CD4-positive, alpha-beta T cell (primary cell): ENCODE measurements at regions of chr16 and their contacts with region 1.

Region 1: DNA sequence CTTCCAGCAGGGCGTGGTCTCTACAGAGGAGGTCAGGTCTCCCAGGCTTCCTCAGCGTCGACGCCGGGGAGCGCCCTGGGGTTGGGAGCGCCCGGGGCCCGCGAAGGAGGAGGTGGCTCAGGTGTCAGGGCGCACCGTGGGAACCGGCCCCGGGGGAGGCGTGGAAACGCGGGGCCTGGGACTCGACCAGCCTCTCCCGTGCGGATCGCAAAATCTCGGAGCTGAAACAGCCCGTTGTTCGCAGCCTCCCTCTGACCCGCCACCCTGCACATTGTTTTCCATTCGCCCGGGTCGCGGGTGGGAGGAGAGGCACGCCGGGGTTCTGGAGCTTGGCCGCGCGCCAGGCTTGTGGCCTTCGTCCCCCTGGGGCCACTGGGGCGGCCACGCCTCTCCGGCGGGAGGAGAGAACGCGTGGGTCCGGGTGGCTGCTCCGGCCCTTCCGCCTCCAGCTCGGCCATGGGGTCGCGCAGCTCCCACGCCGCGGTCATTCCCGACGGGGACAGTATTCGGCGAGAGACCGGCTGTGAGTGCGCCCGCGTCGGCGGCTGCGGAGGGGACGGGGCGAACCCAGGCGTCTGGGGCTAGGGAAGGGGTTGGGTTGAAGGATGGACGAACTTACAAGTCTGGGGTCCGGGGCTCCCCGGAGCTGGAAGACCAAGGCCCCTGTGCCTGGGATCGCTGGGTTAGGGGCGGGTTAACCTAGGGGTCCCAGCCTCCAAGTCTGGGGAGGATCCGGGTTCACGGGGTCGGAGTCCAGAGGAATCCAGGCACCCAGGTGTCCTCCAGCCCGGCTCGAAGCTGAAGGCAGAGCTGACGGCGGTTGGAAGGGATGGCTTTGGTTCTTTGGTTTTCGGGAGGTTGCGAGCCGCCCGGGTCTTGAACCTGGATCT is at the start of gene CHP2:
- DNase-seq: no peak
- ATAC-seq: no peak
- H3K4me3 ChIP-seq: no peak within 1 kb of the TSS
- H3K4me3 Mint-ChIP-seq: no peak within 1 kb of the TSS
- H3K27ac ChIP-seq: no peak within 1 kb of the TSS
- H3K27ac Mint-ChIP-seq: no peak within 1 kb of the TSS
- H3K4me1 ChIP-seq: peaks cover 13% of the 10 kb centered on the region
- H3K4me1 Mint-ChIP-seq: no peaks in the 10 kb centered on the region
- H3K27me3 ChIP-seq: peaks cover 34 to 50% of the 10 kb centered on the region in 2 experiments
- H3K27me3 Mint-ChIP-seq: peaks cover 77% of the 10 kb centered on the region
- CTCF ChIP-seq: no peak
- total RNA-seq, gene CHP2: not detected

Region 2: DNA sequence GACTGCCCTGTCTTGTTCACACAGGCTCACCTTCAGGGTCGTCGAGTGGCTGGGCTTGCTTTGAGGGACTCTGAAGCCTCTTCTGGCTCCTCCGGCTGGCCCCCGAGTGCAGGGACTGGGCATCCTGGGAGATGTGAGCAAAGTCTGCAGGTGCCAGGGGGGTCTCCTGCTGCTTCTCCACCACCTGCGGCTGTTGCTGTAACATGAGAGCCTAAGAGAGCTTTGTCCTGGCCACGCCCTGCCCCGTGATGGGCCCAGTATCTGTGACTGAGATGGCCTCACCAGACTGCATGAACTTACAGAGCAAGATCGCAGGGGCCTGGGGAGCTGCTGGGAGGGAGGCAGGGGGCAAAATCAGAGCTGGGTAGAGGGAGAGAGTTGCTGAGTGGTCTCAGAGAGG is 54.3 kb before region 1 on chr16:
- CTCF ChIA-PET with region 1: no interaction called
- POLR2A ChIA-PET with region 1: no interaction called
- intact Hi-C with region 1: loop called in 1 of 2 experiments (anchors 5 kb)
- DNase-seq: no peak
- ATAC-seq: no peak
- H3K4me3 ChIP-seq: no peak overlapping the region
- H3K4me3 Mint-ChIP-seq: no peak overlapping the region
- H3K27ac ChIP-seq: no peak overlapping the region
- H3K27ac Mint-ChIP-seq: no peak overlapping the region
- H3K4me1 ChIP-seq: peaks cover 8% of the 10 kb centered on the region
- H3K4me1 Mint-ChIP-seq: no peaks in the 10 kb centered on the region
- H3K27me3 ChIP-seq: no peaks in the 10 kb centered on the region
- H3K27me3 Mint-ChIP-seq: peaks cover 11% of the 10 kb centered on the region
- CTCF ChIP-seq: no peak